ENCODE measurements at regions of chrX and their contacts with region 1.

Region 1: DNA sequence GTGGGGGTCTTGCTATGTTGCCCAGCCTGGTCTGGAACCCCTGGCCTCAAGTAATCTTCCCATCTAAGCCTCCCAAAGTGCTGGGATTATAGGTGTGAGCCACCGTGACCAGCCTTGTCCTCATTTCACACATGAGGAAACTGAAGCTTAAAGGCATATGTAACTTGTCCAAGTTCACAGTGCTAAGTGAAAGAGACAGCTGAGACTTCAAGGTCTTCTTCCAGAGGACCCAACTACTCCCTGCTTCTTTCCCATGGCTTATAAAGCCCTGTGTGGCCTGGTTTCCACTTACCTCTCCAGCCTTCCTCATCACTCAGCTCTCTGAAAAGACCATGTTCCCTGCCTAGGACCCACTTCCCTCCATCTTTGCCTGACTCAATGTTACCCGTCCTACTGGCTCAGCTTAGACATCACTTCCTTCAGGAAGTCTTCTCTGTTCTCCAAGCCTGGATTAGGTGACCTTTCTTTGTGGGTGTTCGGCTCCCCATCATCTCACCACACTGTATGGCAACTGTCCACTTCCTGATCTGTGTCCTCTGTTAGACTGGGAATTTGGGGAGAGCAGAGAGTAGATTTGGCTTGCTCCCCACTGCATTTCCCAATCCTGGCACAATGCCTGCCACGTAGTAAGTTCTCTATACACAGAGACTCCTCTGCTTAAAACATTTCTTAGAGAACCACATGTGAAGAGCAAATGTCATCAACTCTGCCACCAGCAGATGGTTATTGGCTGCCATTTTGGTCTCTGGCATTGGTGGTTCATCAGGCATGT is 30.4 kb upstream of the LAMP2 start:
- DNase-seq: no peak
- ATAC-seq: no peak
- H3K4me3 ChIP-seq: no peak overlapping the region
- H3K27ac ChIP-seq: no peak overlapping the region
- H3K4me1 ChIP-seq: peaks cover 13% of the 10 kb centered on the region
- H3K27me3 ChIP-seq: no peaks in the 10 kb centered on the region
- CTCF ChIP-seq: no peak

Region 2: DNA sequence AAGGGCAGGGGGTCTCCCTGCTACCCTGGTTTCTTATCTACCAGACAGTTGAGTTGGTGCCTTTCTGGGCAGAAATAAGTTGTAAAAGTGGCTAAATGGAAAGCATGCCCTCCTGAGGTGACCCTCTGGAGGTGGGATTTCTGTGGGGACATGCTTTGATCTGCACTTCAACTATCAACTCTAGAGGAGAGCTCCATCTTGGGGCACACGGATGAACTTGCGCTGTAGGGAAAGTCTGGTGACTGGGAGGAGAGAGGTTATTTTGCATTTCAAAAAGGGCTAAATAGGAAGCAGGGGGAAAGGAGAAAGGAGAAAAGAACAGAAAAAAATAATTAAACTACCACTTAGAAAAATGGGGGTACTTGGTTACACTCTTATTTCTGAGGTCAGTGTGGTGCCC is 409.3 kb before region 1 on chrX:
- CTCF ChIA-PET with region 1: no interaction called
- POLR2A ChIA-PET with region 1: no interaction called
- intact Hi-C with region 1: no loop called
- DNase-seq: no peak
- ATAC-seq: no peak
- H3K4me3 ChIP-seq: no peak overlapping the region
- H3K27ac ChIP-seq: no peak overlapping the region
- H3K4me1 ChIP-seq: no peaks in the 10 kb centered on the region
- H3K27me3 ChIP-seq: no peaks in the 10 kb centered on the region
- CTCF ChIP-seq: peak; percentile 24; the same call in 1 of the 2 replicates

Region 3: DNA sequence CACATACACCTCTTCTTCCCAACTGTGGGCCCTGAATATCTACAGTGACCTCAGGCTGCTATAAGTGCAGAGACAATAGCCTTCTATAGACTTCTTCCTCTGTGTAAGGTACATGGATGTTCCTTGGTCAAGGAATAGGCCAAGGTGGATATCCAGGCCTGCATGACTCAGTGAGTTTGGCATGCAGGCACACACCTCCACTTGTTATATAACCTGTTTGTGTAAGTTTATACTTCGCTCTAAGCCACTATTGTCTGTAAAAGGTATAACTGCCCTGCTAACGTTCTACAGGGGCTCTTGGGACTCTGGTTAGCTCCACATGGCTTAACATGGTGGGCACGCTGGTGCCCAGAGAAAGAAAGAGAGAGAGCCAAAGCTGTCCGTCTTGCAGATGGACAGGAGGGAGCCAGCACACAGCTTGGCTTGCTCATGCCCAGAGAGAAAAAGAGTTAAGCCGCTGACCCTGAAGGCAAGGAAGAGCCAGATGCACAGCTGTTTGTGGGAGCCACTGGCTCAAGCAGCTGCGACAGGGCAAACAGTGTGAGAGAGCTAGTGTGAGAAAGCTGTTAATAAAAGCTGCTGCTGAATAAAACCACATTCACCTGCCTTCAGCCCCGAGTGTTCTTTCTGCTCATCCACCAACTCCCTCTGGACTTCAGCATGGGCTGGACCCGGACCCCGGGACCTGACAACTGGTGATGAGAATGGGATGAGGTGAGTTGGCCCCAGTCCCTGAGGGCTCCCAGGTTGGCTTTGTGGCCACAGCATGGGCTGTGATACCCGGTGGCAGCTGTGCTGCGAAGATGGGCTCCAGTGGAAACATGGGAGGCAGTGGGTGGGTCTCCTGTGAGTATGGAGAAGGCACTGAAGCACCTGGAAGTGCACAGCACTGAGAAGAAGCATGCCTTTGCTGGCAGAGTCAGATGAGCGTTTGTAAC is 293.4 kb before region 1 on chrX:
- CTCF ChIA-PET with region 1: no interaction called
- POLR2A ChIA-PET with region 1: no interaction called
- intact Hi-C with region 1: no loop called
- DNase-seq: peak; percentile 55
- ATAC-seq: no peak; the same call in 1 of the 2 replicates
- H3K4me3 ChIP-seq: no peak overlapping the region
- H3K27ac ChIP-seq: no peak overlapping the region
- H3K4me1 ChIP-seq: peaks cover 7% of the 10 kb centered on the region; the same call in 1 of the 2 replicates
- H3K27me3 ChIP-seq: no peaks in the 10 kb centered on the region
- CTCF ChIP-seq: no peak

Region 4: GRCh38 chrX:120457766-120458180 is 41.7 kb before region 1 on chrX:
- CTCF ChIA-PET with region 1: no interaction called
- POLR2A ChIA-PET with region 1: no interaction called
- intact Hi-C with region 1: no loop called
- DNase-seq: peak; percentile 90
- ATAC-seq: peak; percentile 88
- H3K4me3 ChIP-seq: peak overlapping the region; percentile 42; the same call in 1 of the 2 replicates
- H3K27ac ChIP-seq: peak overlapping the region; percentile 69
- H3K4me1 ChIP-seq: peaks cover 43% of the 10 kb centered on the region
- H3K27me3 ChIP-seq: no peaks in the 10 kb centered on the region
- CTCF ChIP-seq: no peak

Region 5: GRCh38 chrX:120568035-120568434 is 68.5 kb after region 1 on chrX:
- CTCF ChIA-PET with region 1: no interaction called
- POLR2A ChIA-PET with region 1: interaction called, 15 read pairs
- intact Hi-C with region 1: no loop called
- DNase-seq: no peak
- ATAC-seq: no peak
- H3K4me3 ChIP-seq: no peak overlapping the region
- H3K27ac ChIP-seq: no peak overlapping the region
- H3K4me1 ChIP-seq: 0 out of 2 replicates have a peak, but pooled peaks cover 4% of the 10 kb centered on the region
- H3K27me3 ChIP-seq: no peaks in the 10 kb centered on the region
- CTCF ChIP-seq: no peak

Region 6: GRCh38 chrX:120664081-120664480 is 164.6 kb after region 1 on chrX:
- CTCF ChIA-PET with region 1: no interaction called
- POLR2A ChIA-PET with region 1: no interaction called
- intact Hi-C with region 1: loop called (anchors 1 kb)
- DNase-seq: peak; percentile 57
- ATAC-seq: no peak
- H3K4me3 ChIP-seq: no peak overlapping the region
- H3K27ac ChIP-seq: peak overlapping the region; percentile 50
- H3K4me1 ChIP-seq: peaks cover 35% of the 10 kb centered on the region
- H3K27me3 ChIP-seq: no peaks in the 10 kb centered on the region
- CTCF ChIP-seq: peak; percentile 71

Region 7: GRCh38 chrX:120769576-120770341 is 270.3 kb after region 1 on chrX:
- CTCF ChIA-PET with region 1: no interaction called
- POLR2A ChIA-PET with region 1: no interaction called
- intact Hi-C with region 1: loop called (anchors 1 kb)
- DNase-seq: peak; percentile 82
- ATAC-seq: peak; percentile 67
- H3K4me3 ChIP-seq: no peak overlapping the region
- H3K27ac ChIP-seq: peak overlapping the region; percentile 86
- H3K4me1 ChIP-seq: peaks cover 28% of the 10 kb centered on the region
- H3K27me3 ChIP-seq: no peaks in the 10 kb centered on the region
- CTCF ChIP-seq: peak; percentile 70

Measured in PC-3 (cell line).